ENCODE measurements at regions of chr1 and their contacts with region 1.

Region 1: DNA sequence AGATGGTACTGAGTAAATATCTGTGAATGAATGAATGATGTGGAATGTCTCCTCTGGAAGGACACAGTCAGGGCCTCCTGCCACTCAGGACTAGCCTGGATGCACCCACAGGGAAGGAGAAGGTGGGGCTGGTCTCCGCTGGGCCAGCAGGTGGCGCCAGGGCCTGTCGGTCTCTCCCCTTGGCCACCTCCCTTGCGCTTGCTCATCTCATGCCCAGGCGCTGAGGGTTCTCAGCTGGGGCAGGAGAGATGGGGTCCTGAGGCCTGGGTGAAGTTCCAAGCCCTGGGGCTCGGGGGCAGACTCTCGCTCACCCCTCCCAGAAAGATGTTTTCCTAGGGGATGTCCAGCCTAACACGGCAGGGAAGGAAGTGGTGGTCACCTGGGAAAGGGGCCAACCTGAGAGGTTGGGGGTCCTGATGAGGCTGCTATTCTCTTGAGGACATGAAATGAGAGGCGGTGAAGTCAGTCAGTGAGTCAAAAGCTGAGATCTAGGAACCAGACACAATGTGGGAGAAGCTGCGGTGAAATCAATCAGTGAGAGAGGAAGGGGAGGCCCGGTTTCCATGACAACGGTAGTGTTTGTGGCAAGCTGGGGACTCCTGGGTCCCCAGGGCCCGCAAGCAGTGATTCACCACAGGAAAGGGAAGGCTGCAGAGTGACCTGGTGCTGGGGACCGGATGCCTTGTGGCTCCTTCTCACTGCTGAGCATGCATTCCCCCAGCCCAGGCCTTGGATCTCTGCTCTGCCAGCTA is 14.6 kb upstream of the MEX3A start:
- DNase-seq: peak; percentile 98 to 99 (median 99)
- H3K4me3 ChIP-seq: peak overlapping the region in 2 of 7 experiments; percentile 6 to 16
- H3K27ac ChIP-seq: peak overlapping the region in 1 of 2 experiments; percentile 52
- H3K4me1 ChIP-seq: peaks cover 0 to 29% (median 25%) of the 10 kb centered on the region in 4 experiments
- H3K27me3 ChIP-seq: peaks cover 0 to 16% (median 10%) of the 10 kb centered on the region in 5 experiments

Region 2: DNA sequence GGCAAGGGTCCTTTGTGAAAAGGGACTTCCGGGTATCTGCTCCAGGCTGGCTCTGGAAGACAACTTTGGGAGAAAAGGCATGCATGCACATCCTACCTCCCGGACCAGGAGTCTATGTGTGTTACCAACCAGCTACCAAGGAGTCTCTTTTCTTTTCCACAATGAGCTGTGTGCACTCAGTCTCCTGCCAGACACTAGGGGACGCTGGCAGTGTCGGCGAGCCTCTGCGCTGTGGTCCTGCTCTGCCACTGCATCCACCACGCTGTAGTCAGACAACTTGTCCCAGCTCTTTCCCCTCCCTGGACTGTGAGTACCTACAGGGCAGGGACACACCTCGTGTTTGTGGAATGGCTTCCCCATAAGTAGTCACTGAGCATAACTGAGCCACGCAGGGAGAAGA is 70.9 kb before region 1 on chr1:
- CTCF ChIA-PET with region 1: no interaction called
- POLR2A ChIA-PET with region 1: no interaction called
- DNase-seq: peak; percentile 62 to 84 (median 82)
- H3K4me3 ChIP-seq: no peak overlapping the region
- H3K27ac ChIP-seq: no peak overlapping the region
- H3K4me1 ChIP-seq: peaks cover 2 to 6% (median 4%) of the 10 kb centered on the region in 4 experiments
- H3K27me3 ChIP-seq: peaks cover 0 to 2% (median 0%) of the 10 kb centered on the region in 5 experiments

Region 3: GRCh38 chr1:156123356-156124196 is 26.8 kb after region 1 on chr1:
- CTCF ChIA-PET with region 1: interaction called, 1,191 read pairs
- POLR2A ChIA-PET with region 1: interaction called, 18 read pairs
- DNase-seq: peak; percentile 81 to 90 (median 88)
- H3K4me3 ChIP-seq: peak overlapping the region in 3 of 7 experiments; percentile 2 to 58 (median 36)
- H3K27ac ChIP-seq: peak overlapping the region in 1 of 2 experiments; percentile 79
- H3K4me1 ChIP-seq: peaks cover 7 to 73% (median 72%) of the 10 kb centered on the region in 4 experiments
- H3K27me3 ChIP-seq: peaks cover 0 to 7% (median 0%) of the 10 kb centered on the region in 5 experiments

Region 4: GRCh38 chr1:156129706-156130581 is 33.1 kb after region 1 on chr1:
- CTCF ChIA-PET with region 1: interaction called, 1,191 read pairs
- POLR2A ChIA-PET with region 1: interaction called, 18 read pairs
- DNase-seq: peak in 2 of 3 donors; percentile 67 to 73
- H3K4me3 ChIP-seq: no peak overlapping the region
- H3K27ac ChIP-seq: no peak overlapping the region
- H3K4me1 ChIP-seq: peaks cover 5 to 53% (median 48%) of the 10 kb centered on the region in 4 experiments
- H3K27me3 ChIP-seq: no peaks in the 10 kb centered on the region